Activated CD4-positive, alpha-beta T cell treated with anti-CD3 and anti-CD28 coated beads for 36 hours (primary cell): ENCODE measurements at regions of chr10 and their contacts with region 1.

Region 1: DNA sequence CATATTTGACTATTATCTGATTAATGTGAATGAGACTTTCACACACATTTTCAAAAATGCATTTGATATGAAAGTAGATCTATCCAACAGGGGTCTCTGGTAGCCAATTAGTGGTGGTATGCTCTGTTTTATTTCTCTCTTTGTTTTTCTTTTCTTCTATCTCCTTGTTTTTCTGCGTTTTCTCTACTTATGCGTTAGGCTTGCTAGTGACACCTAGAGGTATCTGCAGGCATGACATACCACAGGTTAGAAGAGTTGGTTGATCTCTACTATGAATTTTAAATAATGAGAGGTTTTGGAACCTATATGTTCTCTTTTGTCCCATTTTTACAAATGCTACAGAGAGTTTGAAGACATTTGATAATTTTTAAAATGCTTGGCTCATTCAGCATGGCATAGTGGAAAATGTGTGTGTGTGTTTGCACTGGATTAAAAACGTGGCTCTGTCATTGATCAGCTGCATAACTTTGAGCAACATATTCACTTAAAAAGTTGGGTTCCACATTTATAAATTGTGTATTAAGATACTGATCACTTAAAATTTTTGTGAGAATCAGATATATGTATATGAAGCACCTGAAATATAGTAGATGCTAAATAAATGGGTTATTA is 28.1 kb upstream of the PLXDC2 start:
- DNase-seq: peak; percentile 26
- ATAC-seq: no peak
- H3K4me3 Mint-ChIP-seq: no peak overlapping the region
- H3K27ac Mint-ChIP-seq: no peak overlapping the region
- H3K4me1 Mint-ChIP-seq: no peaks in the 10 kb centered on the region
- H3K27me3 Mint-ChIP-seq: peaks cover 5% of the 10 kb centered on the region

Region 2: DNA sequence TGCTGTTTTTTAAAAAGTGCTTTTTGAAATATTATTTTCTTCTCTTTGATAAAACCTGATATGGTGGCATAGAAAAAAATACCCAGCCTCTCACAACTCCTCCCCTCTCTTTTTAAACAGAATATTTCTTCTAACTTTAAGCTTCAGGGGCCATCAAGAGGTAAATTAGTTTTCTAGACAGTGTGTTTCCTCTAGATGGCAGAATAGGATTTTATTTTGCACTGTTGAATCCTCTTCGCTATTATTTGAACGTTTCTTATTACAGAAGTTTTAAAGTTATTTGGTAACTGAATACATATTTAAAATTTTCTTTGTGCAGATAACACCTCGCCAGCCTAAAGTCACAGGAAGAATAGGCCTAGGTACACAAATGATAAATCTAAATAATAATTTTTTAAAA is 1098.7 kb before region 1 on chr10:
- CTCF ChIA-PET with region 1: no interaction called
- POLR2A ChIA-PET with region 1: no interaction called
- intact Hi-C with region 1: loop called in 1 of 2 experiments (anchors 10 kb)
- DNase-seq: no peak
- ATAC-seq: no peak
- H3K4me3 Mint-ChIP-seq: no peak overlapping the region
- H3K27ac Mint-ChIP-seq: no peak overlapping the region
- H3K4me1 Mint-ChIP-seq: peaks cover 5% of the 10 kb centered on the region
- H3K27me3 Mint-ChIP-seq: peaks cover 2% of the 10 kb centered on the region

Region 3: GRCh38 chr10:19412531-19412930 is 375.6 kb before region 1 on chr10:
- CTCF ChIA-PET with region 1: no interaction called
- POLR2A ChIA-PET with region 1: no interaction called
- intact Hi-C with region 1: loop called in 1 of 2 experiments (anchors 10 kb)
- DNase-seq: no peak
- ATAC-seq: no peak
- H3K4me3 Mint-ChIP-seq: no peak overlapping the region
- H3K27ac Mint-ChIP-seq: no peak overlapping the region
- H3K4me1 Mint-ChIP-seq: no peaks in the 10 kb centered on the region
- H3K27me3 Mint-ChIP-seq: no peaks in the 10 kb centered on the region

Region 4: DNA sequence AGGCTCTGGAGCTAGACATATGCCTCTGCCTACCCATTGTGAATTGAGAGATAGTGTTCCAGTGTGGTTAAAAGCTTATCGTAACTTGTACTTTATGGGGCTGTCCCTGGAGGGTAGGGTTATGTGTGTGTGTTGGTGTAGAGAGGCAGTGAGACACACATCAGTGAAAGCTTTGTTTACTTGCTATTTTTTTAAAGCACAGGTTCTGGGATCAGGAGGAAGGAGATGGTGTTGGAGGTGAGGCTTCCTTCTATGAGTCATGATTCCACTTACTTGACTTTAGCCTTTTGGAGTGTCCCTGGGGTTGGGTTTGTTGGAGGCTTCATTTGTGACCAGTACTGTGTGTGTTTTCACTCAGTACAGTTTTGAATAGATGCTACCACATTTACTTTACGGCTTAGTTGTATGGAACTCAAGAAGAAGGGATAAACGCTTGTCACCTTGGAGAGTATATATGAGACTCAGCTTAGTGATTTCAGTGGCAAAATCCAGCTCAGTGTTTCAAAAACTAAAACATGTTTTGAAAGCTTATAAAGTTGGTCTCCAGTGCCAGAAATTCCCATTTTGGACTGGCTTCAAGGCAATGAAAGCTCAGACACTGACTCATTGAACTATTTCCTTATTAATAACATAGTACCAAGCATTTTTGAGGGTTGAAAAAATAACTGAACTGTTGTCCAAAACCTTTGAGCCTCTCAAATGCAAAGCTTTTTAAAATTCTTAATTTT is 134.2 kb after region 1 on chr10:
- CTCF ChIA-PET with region 1: no interaction called
- POLR2A ChIA-PET with region 1: no interaction called
- intact Hi-C with region 1: no loop called
- DNase-seq: no peak
- ATAC-seq: no peak
- H3K4me3 Mint-ChIP-seq: no peak overlapping the region
- H3K27ac Mint-ChIP-seq: no peak overlapping the region
- H3K4me1 Mint-ChIP-seq: no peaks in the 10 kb centered on the region
- H3K27me3 Mint-ChIP-seq: no peaks in the 10 kb centered on the region